ENCODE measurements at regions of chr1 and their contacts with region 1.

Region 1: GRCh38 chr1:181189691-181190363 is 101.3 kb downstream of the IER5 start:
- DNase-seq: peak; percentile 87
- ATAC-seq: peak; percentile 91
- H3K4me3 Mint-ChIP-seq: peak overlapping the region; percentile 58
- H3K27ac Mint-ChIP-seq: no peak overlapping the region
- H3K4me1 Mint-ChIP-seq: peaks cover 5% of the 10 kb centered on the region; the same call in 1 of the 2 replicates
- H3K27me3 Mint-ChIP-seq: peaks cover 24% of the 10 kb centered on the region
- CTCF ChIP-seq: peak; percentile 97

Region 2: GRCh38 chr1:181216591-181216994 is 26.8 kb after region 1 on chr1:
- CTCF ChIA-PET with region 1: interaction called, 13 read pairs
- POLR2A ChIA-PET with region 1: no interaction called
- DNase-seq: no peak
- ATAC-seq: peak; percentile 75
- H3K4me3 Mint-ChIP-seq: no peak overlapping the region
- H3K27ac Mint-ChIP-seq: peak overlapping the region; percentile 10; the same call in 1 of the 2 replicates
- H3K4me1 Mint-ChIP-seq: peaks cover 31% of the 10 kb centered on the region
- H3K27me3 Mint-ChIP-seq: no peaks in the 10 kb centered on the region
- CTCF ChIP-seq: no peak

Region 3: DNA sequence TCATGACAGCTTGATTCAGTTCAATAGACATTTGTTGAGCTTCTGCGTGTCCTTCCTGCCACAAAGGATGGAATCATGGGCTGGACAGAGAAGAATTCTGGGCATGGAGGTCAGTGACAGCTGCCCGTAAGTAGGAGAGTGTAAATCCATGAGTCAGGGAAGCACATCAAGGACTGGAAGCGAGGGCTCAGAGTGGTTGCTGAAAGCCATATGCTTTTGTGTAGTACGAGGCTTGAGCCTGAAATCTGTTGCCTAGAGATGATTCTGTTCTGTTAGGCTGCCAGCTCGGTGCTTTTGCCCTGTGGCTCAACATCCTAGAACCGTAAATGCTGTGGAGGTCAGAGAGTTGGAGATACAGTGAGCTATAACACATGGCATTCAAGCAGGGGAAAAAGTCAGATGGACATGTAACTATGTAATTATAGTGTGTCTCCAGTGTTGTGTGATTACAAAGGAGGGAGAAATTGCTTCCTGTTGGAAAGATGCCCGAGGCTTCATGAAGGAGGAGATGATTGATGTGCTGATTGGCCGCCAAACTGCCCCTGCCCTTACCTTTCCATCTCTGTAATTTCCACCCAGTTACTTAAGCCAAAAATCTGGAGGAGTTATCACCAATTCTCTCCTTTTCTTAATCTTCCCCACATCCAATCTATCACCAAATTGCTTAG is 200.7 kb after region 1 on chr1:
- CTCF ChIA-PET with region 1: interaction called, 12 read pairs
- POLR2A ChIA-PET with region 1: no interaction called
- DNase-seq: no peak
- ATAC-seq: no peak
- H3K4me3 Mint-ChIP-seq: no peak overlapping the region
- H3K27ac Mint-ChIP-seq: no peak overlapping the region
- H3K4me1 Mint-ChIP-seq: peaks cover 5% of the 10 kb centered on the region; the same call in 1 of the 2 replicates
- H3K27me3 Mint-ChIP-seq: no peaks in the 10 kb centered on the region
- CTCF ChIP-seq: no peak

Region 4: GRCh38 chr1:181424786-181425403 is 235.1 kb after region 1 on chr1:
- CTCF ChIA-PET with region 1: interaction called, 104 read pairs
- POLR2A ChIA-PET with region 1: interaction called, 3 read pairs
- DNase-seq: peak; percentile 91
- ATAC-seq: peak; percentile 95
- H3K4me3 Mint-ChIP-seq: peak overlapping the region; percentile 31; the same call in 1 of the 2 replicates
- H3K27ac Mint-ChIP-seq: no peak overlapping the region
- H3K4me1 Mint-ChIP-seq: peaks cover 19% of the 10 kb centered on the region
- H3K27me3 Mint-ChIP-seq: peaks cover 21% of the 10 kb centered on the region
- CTCF ChIP-seq: peak; percentile 99